Common myeloid progenitor, CD34-positive (primary cell): ENCODE measurements at regions of chr20 and their contacts with region 1.

Region 1: GRCh38 chr20:62846188-62846890 is 15.3 kb downstream of the TCFL5 start:
- DNase-seq: no peak
- H3K4me3 ChIP-seq: no peak overlapping the region
- H3K27ac ChIP-seq: no peak overlapping the region
- H3K4me1 ChIP-seq: no peaks in the 10 kb centered on the region
- H3K27me3 ChIP-seq: no peaks in the 10 kb centered on the region

Region 2: DNA sequence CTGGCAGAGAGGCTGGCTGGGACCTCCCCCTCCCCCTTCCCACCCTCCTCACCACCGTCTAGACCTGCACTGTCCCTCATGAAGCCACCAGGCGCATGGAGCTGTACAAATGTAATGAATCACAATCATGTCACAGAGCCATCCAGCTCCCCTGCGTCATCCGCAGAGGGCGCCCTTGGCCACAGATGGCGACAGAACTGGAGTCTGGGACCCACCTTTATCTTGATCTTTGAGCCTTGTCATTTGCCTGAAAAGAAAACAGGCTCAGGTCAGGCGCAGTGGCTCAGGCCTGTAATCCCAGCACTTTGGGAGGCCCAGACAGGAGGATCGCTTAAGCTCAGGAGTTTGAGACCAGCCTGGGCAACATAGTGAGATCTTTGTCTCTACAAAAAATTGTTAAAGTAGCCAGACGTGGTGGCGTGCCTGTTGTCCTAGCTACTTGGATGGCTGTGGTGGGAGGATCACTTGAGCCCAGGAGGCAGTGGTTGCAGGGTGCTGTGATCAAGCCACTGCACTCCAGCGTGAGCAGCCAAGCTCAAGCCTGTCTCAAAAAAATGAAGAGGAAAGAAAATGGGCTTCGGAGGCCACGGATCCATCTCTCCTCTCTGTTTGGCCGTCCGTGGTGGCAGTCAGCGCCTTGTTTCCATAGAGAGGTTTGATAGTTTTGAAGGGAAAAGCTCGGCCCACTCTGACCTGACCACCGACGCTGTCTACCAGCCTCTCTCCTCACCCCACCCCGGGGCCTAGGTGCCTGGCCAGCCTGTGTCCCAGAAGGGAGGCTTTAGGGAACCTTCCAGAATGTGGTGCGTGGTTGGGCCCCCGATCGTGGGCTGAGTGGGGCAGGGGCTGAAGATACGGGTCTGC is 23.3 kb before region 1 on chr20:
- CTCF ChIA-PET with region 1: interaction called, 10 read pairs
- POLR2A ChIA-PET with region 1: no interaction called
- DNase-seq: peak; percentile 72 to 86 (median 78)
- H3K4me3 ChIP-seq: no peak overlapping the region
- H3K27ac ChIP-seq: no peak overlapping the region
- H3K4me1 ChIP-seq: peaks cover 0 to 39% (median 19%) of the 10 kb centered on the region in 4 experiments
- H3K27me3 ChIP-seq: peaks cover 0 to 11% (median 7%) of the 10 kb centered on the region in 5 experiments